Right ventricle myocardium inferior (tissue), 1 donor: ENCODE measurements at regions of chr4 and their contacts with region 1.

Region 1: DNA sequence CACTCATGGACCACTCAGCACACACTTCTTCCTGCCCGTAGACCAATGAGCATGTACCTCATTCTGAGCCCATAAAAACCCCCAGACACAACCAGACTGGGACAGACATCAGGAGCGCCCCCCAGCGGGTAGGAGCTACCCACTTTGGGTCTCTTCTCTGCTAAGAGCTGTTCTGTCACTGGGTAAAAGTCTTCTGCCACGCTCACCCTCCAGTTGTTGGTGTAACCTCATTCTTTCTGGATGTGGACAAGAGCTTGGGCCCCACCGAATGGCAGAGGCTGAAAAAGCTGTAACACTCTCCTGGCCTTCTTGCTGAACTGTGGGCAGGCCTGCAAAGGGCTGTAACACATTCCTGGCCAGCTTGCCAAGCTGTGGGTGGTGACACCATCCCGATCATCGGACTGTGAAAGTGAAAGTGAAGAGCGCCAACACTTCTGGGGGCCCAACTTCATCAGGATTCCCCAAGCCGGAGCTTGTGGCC is 137.6 kb downstream of the TECRL start:
- DNase-seq: peak; percentile 43
- ATAC-seq: peak; percentile 86

Region 2: GRCh38 chr4:64341711-64342110 is 70.1 kb after region 1 on chr4:
- intact Hi-C with region 1: no loop called
- DNase-seq: peak; percentile 82
- ATAC-seq: peak; percentile 96

Region 3: GRCh38 chr4:64417974-64418373 is 146.3 kb after region 1 on chr4:
- intact Hi-C with region 1: no loop called
- DNase-seq: no peak
- ATAC-seq: peak; percentile 87

Region 4: GRCh38 chr4:64545593-64545992 is 274.0 kb after region 1 on chr4:
- intact Hi-C with region 1: loop called (anchors 10 kb)
- DNase-seq: peak; percentile 25
- ATAC-seq: no peak